ENCODE measurements at regions of chr22 and their contacts with region 1.

Region 1: GRCh38 chr22:39520054-39520891 is at the start of gene ATF4:
- DNase-seq: peak; percentile 98
- total RNA-seq, gene ATF4: 177 TPM

Region 2: GRCh38 chr22:39170825-39171622 is 349.2 kb before region 1 on chr22:
- intact Hi-C with region 1: loop called (anchors 5 kb)
- DNase-seq: peak; percentile 95

Region 3: GRCh38 chr22:39319270-39320022 is 200.8 kb before region 1 on chr22 and contains the start of gene RPL3:
- intact Hi-C with region 1: loop called (anchors 5 kb)
- DNase-seq: peak; percentile 98
- total RNA-seq, gene RPL3: 317 TPM

Region 4: GRCh38 chr22:39343259-39344048 is 176.8 kb before region 1 on chr22:
- intact Hi-C with region 1: loop called (anchors 5 kb)
- DNase-seq: no peak

Region 5: GRCh38 chr22:39496131-39496838 is 24.0 kb before region 1 on chr22:
- intact Hi-C with region 1: loop called (anchors 1 kb)
- DNase-seq: no peak

Region 6: DNA sequence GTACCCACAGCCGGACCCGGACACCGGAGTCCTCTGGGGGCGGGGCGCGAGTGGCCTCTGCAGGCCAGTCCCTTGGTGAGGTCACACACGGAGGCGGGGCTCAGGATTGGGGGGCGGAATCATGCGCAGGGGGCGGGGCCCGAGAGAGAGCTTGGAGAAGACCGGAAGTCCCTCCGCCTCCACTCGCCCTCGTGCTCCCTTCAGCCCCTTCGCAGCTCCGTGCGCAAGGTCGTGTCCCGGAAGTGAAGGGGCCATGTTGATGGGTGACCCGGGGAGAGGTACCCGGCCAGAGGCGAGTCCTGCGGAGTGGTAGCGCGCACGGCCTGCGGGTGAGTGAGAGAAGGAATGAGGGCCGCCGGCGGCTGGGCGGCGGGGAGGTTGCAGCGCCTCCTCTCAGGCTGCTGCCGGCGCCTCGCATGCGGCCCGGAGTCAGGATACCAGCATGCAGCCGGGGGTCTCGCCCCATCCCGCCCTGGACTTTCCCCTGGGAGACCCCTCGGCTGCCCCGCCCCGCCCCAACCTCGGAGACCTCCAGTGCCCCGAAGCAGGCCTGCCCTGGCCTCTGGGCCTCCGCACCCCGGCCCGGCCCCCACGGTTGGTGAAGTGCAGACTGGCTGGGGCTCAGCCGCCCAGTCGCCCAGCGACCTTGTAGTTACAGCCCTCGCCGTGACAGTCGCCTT is 18.0 kb before region 1 on chr22 and contains the start of gene MIEF1:
- intact Hi-C with region 1: loop called (anchors 1 kb)
- DNase-seq: peak; percentile 99
- total RNA-seq, gene MIEF1: 19.4 TPM

Measured in cardiac septum (tissue), 1 donor.